Activated T-helper 1 cell treated with anti-CD3 and anti-CD28 coated beads, Interleukin-12 subunit alpha, Interleukin-12 subunit beta, Interleukin-2, Interleukin-4 antibody, amounts not matched to agents 30 ng/mL and 10 ng/mL and 1 ng/mL, durations not matched to agents 14 hours and 24 hours and 36 hours (primary cell): ENCODE measurements at regions of chr3 and their contacts with region 1.

Region 1: DNA sequence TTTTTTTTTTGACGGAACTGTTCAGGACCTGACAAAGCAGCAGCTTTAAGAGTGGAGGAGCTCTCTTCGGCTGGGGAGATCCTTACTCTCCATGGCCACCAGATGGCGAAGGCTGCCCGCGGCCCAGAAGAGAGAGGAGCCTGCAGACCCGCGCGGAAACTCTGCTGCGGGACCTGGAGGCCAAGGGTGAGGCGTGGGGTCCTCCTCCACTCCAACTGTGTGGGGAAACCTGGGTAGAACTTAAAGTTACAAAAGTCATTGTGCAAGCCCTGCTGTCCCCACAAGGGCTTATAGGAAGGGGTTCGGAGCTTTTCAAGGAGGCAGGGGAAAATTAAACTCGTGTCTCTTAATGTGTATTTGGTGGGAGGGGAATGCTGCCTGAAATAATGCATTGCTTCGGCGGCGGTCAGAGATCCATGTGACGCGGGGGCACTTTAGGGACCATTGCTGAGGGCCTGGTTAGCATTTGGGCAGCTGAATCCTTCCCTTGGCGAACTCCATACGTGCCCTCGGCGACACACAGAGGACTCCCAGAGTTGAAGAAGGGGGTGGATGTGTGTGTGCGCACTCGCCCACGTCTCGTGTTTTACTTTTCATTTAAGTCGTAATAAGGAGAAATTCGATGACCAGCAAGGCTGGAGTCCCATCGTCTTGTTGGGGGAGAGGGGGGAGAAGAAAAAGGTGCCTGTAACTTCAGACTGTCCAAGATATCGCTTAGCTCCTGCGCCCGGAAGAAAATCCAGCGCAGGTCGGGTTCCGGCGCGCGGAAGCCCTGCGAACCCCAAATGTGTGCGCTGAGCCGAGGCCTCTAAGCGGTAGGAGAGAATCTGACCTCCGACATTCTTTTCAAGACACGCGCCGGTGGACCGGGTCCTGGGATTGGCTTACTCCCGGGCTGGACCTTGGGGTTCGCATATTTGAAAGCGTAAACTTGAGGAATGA is 9.7 kb downstream of the EOMES start:
- DNase-seq: peak; percentile 75
- H3K4me3 Mint-ChIP-seq: peak overlapping the region; percentile 90
- H3K27ac Mint-ChIP-seq: peak overlapping the region; percentile 91
- H3K4me1 Mint-ChIP-seq: peaks cover 32% of the 10 kb centered on the region
- H3K27me3 Mint-ChIP-seq: peaks cover 45% of the 10 kb centered on the region

Region 2: DNA sequence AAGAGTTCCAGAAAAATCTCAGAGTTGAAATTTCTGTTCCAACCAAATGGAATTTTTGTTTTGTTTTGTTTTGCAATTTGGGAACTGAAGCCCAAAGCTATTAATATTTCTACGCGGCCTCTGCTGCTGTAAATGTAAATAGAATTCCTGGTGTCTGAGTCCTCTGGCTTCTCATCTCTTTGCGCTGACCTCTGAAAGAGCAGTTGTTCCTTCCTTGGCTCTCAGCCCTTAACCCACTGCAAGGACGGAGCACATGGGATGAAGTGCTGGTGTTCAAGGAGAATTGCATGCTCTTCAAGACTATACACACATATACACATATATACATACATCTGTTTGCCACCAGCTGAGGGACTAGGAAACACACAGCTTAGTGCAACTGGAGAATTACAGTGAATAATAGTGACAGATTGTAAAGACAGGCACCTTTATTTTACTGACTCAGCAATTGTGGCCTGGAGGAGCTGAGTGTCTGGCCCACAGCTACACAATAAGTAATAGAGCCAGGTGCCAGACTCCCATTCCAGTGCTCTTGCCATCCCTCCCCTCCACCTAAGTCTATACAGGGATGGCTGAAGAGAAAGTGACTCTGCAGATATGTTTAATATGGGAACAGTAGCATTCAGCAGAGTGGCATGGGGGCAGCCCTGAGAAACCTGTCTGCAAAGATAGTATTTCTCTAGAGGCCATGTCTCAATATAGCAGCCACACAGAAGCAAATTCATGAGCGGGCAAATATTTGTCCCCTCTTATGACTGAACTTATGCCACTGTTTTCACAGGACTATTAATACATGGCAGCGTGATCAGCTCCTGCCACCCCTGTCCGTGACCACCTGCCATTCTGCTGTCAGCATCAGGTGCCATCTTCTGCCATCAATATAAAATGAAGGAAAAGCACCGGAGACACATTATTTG is 385.5 kb before region 1 on chr3:
- intact Hi-C with region 1: no loop called
- DNase-seq: no peak
- H3K4me3 Mint-ChIP-seq: no peak overlapping the region
- H3K27ac Mint-ChIP-seq: no peak overlapping the region
- H3K4me1 Mint-ChIP-seq: no peaks in the 10 kb centered on the region
- H3K27me3 Mint-ChIP-seq: no peaks in the 10 kb centered on the region

Region 3: DNA sequence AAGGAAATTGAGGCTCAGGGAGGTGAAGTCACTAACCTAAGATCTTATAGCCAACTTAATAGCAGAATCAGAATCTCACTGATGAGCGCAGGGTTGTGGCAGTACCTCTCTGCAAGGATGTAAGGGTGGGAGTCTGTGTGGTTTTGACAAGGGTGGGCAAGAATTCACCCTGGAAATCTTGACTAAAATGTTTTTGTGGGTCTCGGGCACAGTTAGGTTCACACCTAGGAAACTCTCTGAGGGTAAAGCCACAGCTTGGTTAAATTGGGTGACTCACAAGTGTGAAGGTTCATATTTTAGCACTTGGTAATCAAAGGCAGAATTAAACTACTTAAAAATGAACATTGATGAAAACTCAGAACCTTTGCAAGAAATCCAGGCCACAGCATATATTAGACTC is 187.9 kb after region 1 on chr3:
- intact Hi-C with region 1: loop called (anchors 2 kb)
- DNase-seq: peak; percentile 24
- H3K4me3 Mint-ChIP-seq: peak overlapping the region; percentile 2
- H3K27ac Mint-ChIP-seq: peak overlapping the region; percentile 24
- H3K4me1 Mint-ChIP-seq: peaks cover 56% of the 10 kb centered on the region
- H3K27me3 Mint-ChIP-seq: peaks cover 4% of the 10 kb centered on the region

Region 4: DNA sequence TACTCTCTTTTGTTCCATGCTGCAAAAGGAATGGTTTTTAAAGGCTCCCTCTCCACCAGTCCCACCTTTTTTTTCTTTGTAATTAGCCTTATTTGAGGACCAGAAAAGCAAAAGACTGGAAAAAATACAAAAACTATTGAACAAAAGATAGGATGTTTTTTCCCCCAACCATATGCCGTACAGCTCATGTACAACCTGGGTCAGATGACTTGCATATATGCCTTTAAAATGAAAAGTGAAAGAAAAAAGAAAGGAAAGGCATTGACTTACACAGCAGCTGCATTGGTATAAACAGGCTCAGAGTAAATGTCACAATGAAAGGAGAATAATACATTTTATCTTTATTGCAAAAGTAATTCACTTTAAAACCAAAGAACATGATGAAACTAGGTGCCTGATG is 459.6 kb after region 1 on chr3:
- intact Hi-C with region 1: loop called (anchors 5 kb)
- DNase-seq: no peak
- H3K4me3 Mint-ChIP-seq: peak overlapping the region; percentile 15
- H3K27ac Mint-ChIP-seq: peak overlapping the region; percentile 84
- H3K4me1 Mint-ChIP-seq: peaks cover 13% of the 10 kb centered on the region
- H3K27me3 Mint-ChIP-seq: peaks cover 2% of the 10 kb centered on the region

Region 5: GRCh38 chr3:28286595-28286994 is 574.2 kb after region 1 on chr3:
- intact Hi-C with region 1: loop called (anchors 1 kb)
- DNase-seq: no peak
- H3K4me3 Mint-ChIP-seq: no peak overlapping the region
- H3K27ac Mint-ChIP-seq: no peak overlapping the region
- H3K4me1 Mint-ChIP-seq: peaks cover 23% of the 10 kb centered on the region
- H3K27me3 Mint-ChIP-seq: no peaks in the 10 kb centered on the region

Region 6: GRCh38 chr3:28575746-28576613 is 863.6 kb after region 1 on chr3:
- intact Hi-C with region 1: loop called (anchors 5 kb)
- DNase-seq: no peak
- H3K4me3 Mint-ChIP-seq: no peak overlapping the region
- H3K27ac Mint-ChIP-seq: no peak overlapping the region
- H3K4me1 Mint-ChIP-seq: peaks cover 9% of the 10 kb centered on the region
- H3K27me3 Mint-ChIP-seq: peaks cover 45% of the 10 kb centered on the region